ENCODE measurements at regions of chr9 and their contacts with region 1.

Region 1: GRCh38 chr9:78035383-78035993 is 3.9 kb upstream of the GNAQ start:
- DNase-seq: peak in 8 of 9 experiments; percentile 6 to 83 (median 54)
- ATAC-seq: peak; percentile 12
- H3K4me3 ChIP-seq: no peak overlapping the region
- H3K4me3 Mint-ChIP-seq: no peak overlapping the region
- H3K27ac ChIP-seq: no peak overlapping the region
- H3K27ac Mint-ChIP-seq: no peak overlapping the region
- H3K4me1 ChIP-seq: peaks cover 23% of the 10 kb centered on the region
- H3K4me1 Mint-ChIP-seq: peaks cover 31% of the 10 kb centered on the region
- H3K27me3 ChIP-seq: no peaks in the 10 kb centered on the region
- H3K27me3 Mint-ChIP-seq: peaks cover 2% of the 10 kb centered on the region
- CTCF ChIP-seq: peak; percentile 88

Region 2: DNA sequence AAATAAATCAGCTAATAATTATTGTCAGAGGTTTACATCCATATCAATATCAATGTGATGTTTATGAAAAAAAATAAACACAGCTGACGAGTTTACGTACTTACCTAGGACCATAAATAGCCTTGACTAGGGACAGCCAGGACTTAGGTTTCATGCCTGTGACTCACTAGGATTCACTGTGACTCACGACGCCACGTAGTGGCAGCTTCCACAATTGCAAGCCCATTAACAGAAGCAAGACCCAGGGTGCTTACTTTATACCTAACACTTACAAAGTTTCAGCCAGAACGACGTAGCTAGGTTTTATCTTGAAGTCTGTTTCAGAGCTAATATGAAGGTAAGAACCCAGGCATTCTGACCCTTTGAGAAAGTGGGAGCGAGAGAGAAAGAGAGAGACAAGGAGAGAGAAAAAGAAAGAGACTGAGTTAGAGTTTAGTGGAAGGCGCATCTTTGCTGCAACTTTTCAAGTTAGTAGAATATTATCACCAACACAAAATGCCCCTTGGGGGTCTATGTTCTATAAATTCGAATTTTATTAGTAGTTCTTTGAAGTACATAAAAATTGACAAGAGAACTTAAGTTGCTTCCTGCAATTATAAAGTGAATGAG is 578.6 kb before region 1 on chr9:
- CTCF ChIA-PET with region 1: interaction called, 5 read pairs
- POLR2A ChIA-PET with region 1: no interaction called
- intact Hi-C with region 1: loop called (anchors 5 kb)
- DNase-seq: peak; percentile 63 to 81 (median 74)
- ATAC-seq: peak; percentile 85
- H3K4me3 ChIP-seq: no peak overlapping the region
- H3K4me3 Mint-ChIP-seq: no peak overlapping the region
- H3K27ac ChIP-seq: no peak overlapping the region
- H3K27ac Mint-ChIP-seq: no peak overlapping the region
- H3K4me1 ChIP-seq: no peaks in the 10 kb centered on the region
- H3K4me1 Mint-ChIP-seq: peaks cover 15% of the 10 kb centered on the region
- H3K27me3 ChIP-seq: no peaks in the 10 kb centered on the region
- H3K27me3 Mint-ChIP-seq: no peaks in the 10 kb centered on the region
- CTCF ChIP-seq: peak; percentile 74

Region 3: GRCh38 chr9:77841739-77842386 is 193.6 kb before region 1 on chr9:
- CTCF ChIA-PET with region 1: interaction called, 12 read pairs
- POLR2A ChIA-PET with region 1: no interaction called
- intact Hi-C with region 1: loop called (anchors 2 kb)
- DNase-seq: peak in 1 of 9 experiments; percentile 24
- ATAC-seq: no peak
- H3K4me3 ChIP-seq: no peak overlapping the region
- H3K4me3 Mint-ChIP-seq: no peak overlapping the region
- H3K27ac ChIP-seq: no peak overlapping the region
- H3K27ac Mint-ChIP-seq: no peak overlapping the region
- H3K4me1 ChIP-seq: no peaks in the 10 kb centered on the region
- H3K4me1 Mint-ChIP-seq: peaks cover 15% of the 10 kb centered on the region
- H3K27me3 ChIP-seq: no peaks in the 10 kb centered on the region
- H3K27me3 Mint-ChIP-seq: no peaks in the 10 kb centered on the region
- CTCF ChIP-seq: no peak

Region 4: GRCh38 chr9:77987081-77987656 is 48.3 kb before region 1 on chr9:
- CTCF ChIA-PET with region 1: interaction called, 10 read pairs
- POLR2A ChIA-PET with region 1: interaction called, 4 read pairs
- intact Hi-C with region 1: no loop called
- DNase-seq: no peak
- ATAC-seq: no peak
- H3K4me3 ChIP-seq: no peak overlapping the region
- H3K4me3 Mint-ChIP-seq: no peak overlapping the region
- H3K27ac ChIP-seq: no peak overlapping the region
- H3K27ac Mint-ChIP-seq: no peak overlapping the region
- H3K4me1 ChIP-seq: peaks cover 14% of the 10 kb centered on the region
- H3K4me1 Mint-ChIP-seq: peaks cover 46% of the 10 kb centered on the region
- H3K27me3 ChIP-seq: no peaks in the 10 kb centered on the region
- H3K27me3 Mint-ChIP-seq: no peaks in the 10 kb centered on the region
- CTCF ChIP-seq: no peak

Region 5: GRCh38 chr9:78053627-78054026 is 18.1 kb after region 1 on chr9:
- CTCF ChIA-PET with region 1: interaction called, 42 read pairs
- POLR2A ChIA-PET with region 1: interaction called, 7 read pairs
- intact Hi-C with region 1: no loop called
- DNase-seq: no peak
- ATAC-seq: no peak
- H3K4me3 ChIP-seq: no peak overlapping the region
- H3K4me3 Mint-ChIP-seq: no peak overlapping the region
- H3K27ac ChIP-seq: no peak overlapping the region
- H3K27ac Mint-ChIP-seq: no peak overlapping the region
- H3K4me1 ChIP-seq: peaks cover 16% of the 10 kb centered on the region
- H3K4me1 Mint-ChIP-seq: peaks cover 20% of the 10 kb centered on the region
- H3K27me3 ChIP-seq: no peaks in the 10 kb centered on the region
- H3K27me3 Mint-ChIP-seq: no peaks in the 10 kb centered on the region
- CTCF ChIP-seq: no peak

Region 6: GRCh38 chr9:78213712-78214111 is 178.2 kb after region 1 on chr9:
- CTCF ChIA-PET with region 1: interaction called, 6 read pairs
- POLR2A ChIA-PET with region 1: no interaction called
- intact Hi-C with region 1: loop called (anchors 1 to 5 kb)
- DNase-seq: peak in 2 of 9 experiments; percentile 56 to 68
- ATAC-seq: peak; percentile 50
- H3K4me3 ChIP-seq: no peak overlapping the region
- H3K4me3 Mint-ChIP-seq: no peak overlapping the region
- H3K27ac ChIP-seq: no peak overlapping the region
- H3K27ac Mint-ChIP-seq: no peak overlapping the region
- H3K4me1 ChIP-seq: peaks cover 40% of the 10 kb centered on the region
- H3K4me1 Mint-ChIP-seq: peaks cover 42% of the 10 kb centered on the region
- H3K27me3 ChIP-seq: no peaks in the 10 kb centered on the region
- H3K27me3 Mint-ChIP-seq: no peaks in the 10 kb centered on the region
- CTCF ChIP-seq: peak; percentile 49

Region 7: DNA sequence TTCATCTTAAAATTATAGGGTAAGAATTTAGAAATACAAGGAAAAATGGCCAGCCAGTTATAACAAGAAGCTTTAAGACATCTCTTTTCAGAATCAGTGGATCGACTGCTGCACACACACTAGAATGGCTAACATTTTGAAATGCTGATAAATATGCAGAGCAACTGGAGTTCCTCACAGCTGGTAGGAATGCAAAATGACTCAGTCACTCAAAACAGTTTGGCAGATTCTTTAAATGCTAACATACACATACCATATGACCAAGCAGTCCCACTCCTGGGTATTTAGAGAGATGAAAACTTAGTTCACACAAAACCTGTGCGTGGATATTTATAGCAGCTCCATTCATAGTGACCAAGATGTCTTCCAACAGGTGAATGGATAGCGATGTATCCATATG is 238.3 kb after region 1 on chr9:
- CTCF ChIA-PET with region 1: no interaction called
- POLR2A ChIA-PET with region 1: no interaction called
- intact Hi-C with region 1: no loop called
- DNase-seq: no peak
- ATAC-seq: no peak
- H3K4me3 ChIP-seq: no peak overlapping the region
- H3K4me3 Mint-ChIP-seq: no peak overlapping the region
- H3K27ac ChIP-seq: no peak overlapping the region
- H3K27ac Mint-ChIP-seq: no peak overlapping the region
- H3K4me1 ChIP-seq: no peaks in the 10 kb centered on the region
- H3K4me1 Mint-ChIP-seq: peaks cover 9% of the 10 kb centered on the region
- H3K27me3 ChIP-seq: no peaks in the 10 kb centered on the region
- H3K27me3 Mint-ChIP-seq: no peaks in the 10 kb centered on the region
- CTCF ChIP-seq: no peak